ENCODE measurements at regions of chr7 and their contacts with region 1.

Region 1: GRCh38 chr7:34133983-34134782 is 228.8 kb downstream of the BMPER start:
- DNase-seq: peak; percentile 67
- H3K4me3 ChIP-seq: no peak overlapping the region
- H3K27ac ChIP-seq: no peak overlapping the region
- H3K4me1 ChIP-seq: no peaks in the 10 kb centered on the region
- H3K27me3 ChIP-seq: peaks cover 2 to 4% of the 10 kb centered on the region in 2 experiments
- CTCF ChIP-seq: peak; percentile 64 to 76
- POLR2A ChIP-seq: no peak

Region 2: DNA sequence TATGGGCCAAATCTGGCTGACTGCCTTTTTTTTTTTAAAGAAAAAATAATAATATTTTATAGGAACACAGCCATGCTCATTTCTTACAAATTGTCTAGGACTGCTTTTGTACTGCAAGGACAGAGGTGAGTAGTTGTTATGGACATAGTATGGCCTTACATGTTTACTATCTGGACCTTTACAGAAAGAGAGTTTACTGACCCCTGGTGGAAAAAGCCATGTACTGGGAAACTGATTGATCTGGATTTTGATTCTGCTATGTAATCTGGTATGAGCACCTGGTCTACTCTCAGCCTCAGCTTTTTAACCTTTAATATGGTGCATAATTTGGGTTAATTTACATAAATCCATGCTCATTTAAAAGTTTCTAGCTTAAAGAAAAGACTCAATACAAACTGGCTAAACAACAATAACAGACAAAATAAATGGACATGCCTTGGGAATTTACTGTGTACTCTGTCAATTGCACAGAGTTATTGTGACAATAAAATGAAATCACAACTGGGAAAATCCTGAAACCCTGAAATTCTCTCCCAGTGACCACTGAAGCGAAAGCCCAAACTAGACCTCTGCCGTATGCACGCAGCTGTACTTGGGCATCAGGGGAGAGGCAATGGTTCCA is 31.9 kb after region 1 on chr7:
- CTCF ChIA-PET with region 1: interaction called, 3 read pairs
- POLR2A ChIA-PET with region 1: no interaction called
- dilution Hi-C with region 1: no loop called
- intact Hi-C with region 1: loop called (anchors 1 kb)
- DNase-seq: peak; percentile 37
- H3K4me3 ChIP-seq: no peak overlapping the region
- H3K27ac ChIP-seq: no peak overlapping the region
- H3K4me1 ChIP-seq: no peaks in the 10 kb centered on the region
- H3K27me3 ChIP-seq: peaks cover 0 to 2% of the 10 kb centered on the region in 2 experiments
- CTCF ChIP-seq: peak; percentile 37 to 59
- POLR2A ChIP-seq: no peak

Region 3: GRCh38 chr7:34596892-34597291 is 462.7 kb after region 1 on chr7:
- CTCF ChIA-PET with region 1: interaction called, 83 read pairs
- POLR2A ChIA-PET with region 1: no interaction called
- dilution Hi-C with region 1: no loop called
- intact Hi-C with region 1: loop called (anchors 1 kb)
- DNase-seq: peak; percentile 50
- H3K4me3 ChIP-seq: no peak overlapping the region
- H3K27ac ChIP-seq: no peak overlapping the region
- H3K4me1 ChIP-seq: no peaks in the 10 kb centered on the region
- H3K27me3 ChIP-seq: no peaks in the 10 kb centered on the region
- CTCF ChIP-seq: peak in 1 of 2 donors; percentile 42
- POLR2A ChIP-seq: no peak